ENCODE measurements at regions of chr2 and their contacts with region 1.

Region 1: GRCh38 chr2:207710814-207711740 is at the start of gene CCNYL1:
- DNase-seq: peak; percentile 98
- H3K4me3 Mint-ChIP-seq: peak within 1 kb of the TSS; percentile 88
- H3K27ac Mint-ChIP-seq: peak within 1 kb of the TSS; percentile 56
- H3K4me1 Mint-ChIP-seq: peaks cover 26% of the 10 kb centered on the region
- H3K27me3 Mint-ChIP-seq: no peaks in the 10 kb centered on the region
- total RNA-seq, gene CCNYL1: 2.5 to 2.7 TPM

Region 2: GRCh38 chr2:207688597-207688996 is 22.5 kb before region 1 on chr2:
- CTCF ChIA-PET with region 1: no interaction called
- intact Hi-C with region 1: loop called (anchors 1 kb)
- DNase-seq: no peak
- H3K4me3 Mint-ChIP-seq: no peak overlapping the region
- H3K27ac Mint-ChIP-seq: no peak overlapping the region
- H3K4me1 Mint-ChIP-seq: peaks cover 13% of the 10 kb centered on the region
- H3K27me3 Mint-ChIP-seq: no peaks in the 10 kb centered on the region

Region 3: GRCh38 chr2:208025037-208025813 is 314.1 kb after region 1 on chr2 and contains the start of gene PLEKHM3:
- CTCF ChIA-PET with region 1: no interaction called
- intact Hi-C with region 1: loop called (anchors 1 kb)
- DNase-seq: peak; percentile 81
- H3K4me3 Mint-ChIP-seq: peak within 1 kb of the TSS; percentile 93
- H3K27ac Mint-ChIP-seq: peak within 1 kb of the TSS; percentile 88
- H3K4me1 Mint-ChIP-seq: peaks cover 14% of the 10 kb centered on the region
- H3K27me3 Mint-ChIP-seq: no peaks in the 10 kb centered on the region
- total RNA-seq, gene PLEKHM3: 6.5 to 7.0 TPM

Measured in activated naive CD4-positive, alpha-beta T cell treated with anti-CD3 and anti-CD28 coated beads for 36 hours (primary cell).